MCF 10A (cell line): ENCODE measurements at regions of chr5 and their contacts with region 1.

Region 1: DNA sequence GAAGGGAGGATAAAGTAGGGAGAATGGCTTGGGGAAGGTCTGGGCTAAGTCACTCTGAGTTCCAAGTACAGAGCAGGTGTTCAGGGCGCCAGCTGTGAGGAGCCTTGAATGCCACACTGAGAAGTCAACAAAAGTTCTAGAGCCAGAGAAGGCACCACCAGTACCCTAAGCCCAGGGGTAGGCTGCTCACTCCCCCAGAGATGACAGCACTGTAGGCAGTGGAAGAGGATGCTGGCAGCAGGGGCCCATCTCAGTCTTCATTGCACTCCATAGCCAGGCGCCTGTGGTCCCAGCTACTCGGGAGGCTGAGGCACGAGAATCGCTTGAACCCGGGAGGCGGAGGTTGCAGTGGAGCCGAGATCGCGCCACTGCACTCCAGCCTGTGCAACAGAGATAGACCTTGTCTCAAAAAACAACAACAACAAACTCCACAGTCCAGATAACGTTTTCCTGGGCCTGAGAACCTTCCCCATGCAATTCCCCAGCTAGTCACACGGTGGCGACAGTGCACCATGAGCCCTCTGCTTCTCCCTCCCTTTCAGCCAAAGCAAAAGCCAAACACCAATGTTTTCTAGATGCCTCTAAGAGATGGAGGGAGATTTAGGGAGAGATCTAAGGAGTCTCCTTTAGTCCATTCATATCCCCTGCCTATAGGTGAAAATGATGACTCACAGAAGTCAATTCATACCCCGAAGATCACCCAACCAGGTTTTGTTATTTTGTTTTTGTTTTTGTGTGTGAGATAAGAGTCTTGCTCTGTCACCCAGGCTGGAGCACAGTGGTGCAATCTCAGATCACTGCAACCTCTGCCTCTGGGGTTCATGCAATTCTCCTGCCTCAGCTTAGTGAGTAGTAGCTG is 19.8 kb upstream of the NSD1 start:
- DNase-seq: peak; percentile 86
- H3K4me3 Mint-ChIP-seq: no peak overlapping the region
- H3K27ac Mint-ChIP-seq: no peak overlapping the region
- H3K4me1 Mint-ChIP-seq: peaks cover 4% of the 10 kb centered on the region
- H3K27me3 Mint-ChIP-seq: no peaks in the 10 kb centered on the region
- CTCF ChIP-seq: peak; percentile 100

Region 2: DNA sequence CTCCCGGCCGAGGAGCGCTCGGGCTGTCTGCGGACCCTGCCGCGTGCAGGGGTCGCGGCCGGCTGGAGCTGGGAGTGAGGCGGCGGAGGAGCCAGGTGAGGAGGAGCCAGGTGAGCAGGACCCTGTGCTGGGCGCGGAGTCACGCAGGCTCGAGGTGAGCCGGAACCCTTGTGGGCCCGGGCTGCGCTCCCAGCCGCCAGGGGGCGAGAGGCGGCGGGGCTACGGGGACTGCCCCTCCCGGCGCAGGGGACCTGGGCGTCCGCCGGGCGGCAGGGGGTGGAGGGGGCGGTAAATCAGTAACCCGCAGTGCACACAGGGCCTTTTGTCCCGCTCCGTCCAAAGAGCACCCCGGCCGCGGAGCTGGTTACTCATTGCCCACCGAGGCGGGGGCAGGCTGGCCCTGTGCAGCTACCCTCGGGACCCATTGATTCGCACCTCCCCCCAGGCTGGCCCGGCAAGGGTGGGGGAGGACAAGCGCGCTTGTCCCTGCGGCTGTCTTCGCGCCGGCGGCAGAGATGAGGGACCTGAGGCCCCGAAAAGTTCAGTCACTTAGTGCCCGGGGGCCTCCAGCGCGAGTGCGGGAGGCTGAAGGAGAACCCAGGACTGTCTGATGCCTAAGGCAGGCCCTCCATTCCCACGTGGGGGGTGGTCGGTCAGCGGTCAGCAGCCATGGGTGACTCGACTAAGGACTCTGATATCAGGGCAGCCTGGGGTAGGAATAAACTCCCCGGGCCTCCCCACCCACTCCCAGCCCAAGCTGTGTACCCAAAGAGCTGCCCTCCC is 26.7 kb before region 1 on chr5:
- CTCF ChIA-PET with region 1: interaction called, 56 read pairs
- POLR2A ChIA-PET with region 1: interaction called, 3 read pairs
- intact Hi-C with region 1: no loop called
- DNase-seq: no peak
- H3K4me3 Mint-ChIP-seq: peak overlapping the region; percentile 24
- H3K27ac Mint-ChIP-seq: no peak overlapping the region
- H3K4me1 Mint-ChIP-seq: peaks cover 7% of the 10 kb centered on the region
- H3K27me3 Mint-ChIP-seq: peaks cover 22% of the 10 kb centered on the region
- CTCF ChIP-seq: peak; percentile 59

Region 3: DNA sequence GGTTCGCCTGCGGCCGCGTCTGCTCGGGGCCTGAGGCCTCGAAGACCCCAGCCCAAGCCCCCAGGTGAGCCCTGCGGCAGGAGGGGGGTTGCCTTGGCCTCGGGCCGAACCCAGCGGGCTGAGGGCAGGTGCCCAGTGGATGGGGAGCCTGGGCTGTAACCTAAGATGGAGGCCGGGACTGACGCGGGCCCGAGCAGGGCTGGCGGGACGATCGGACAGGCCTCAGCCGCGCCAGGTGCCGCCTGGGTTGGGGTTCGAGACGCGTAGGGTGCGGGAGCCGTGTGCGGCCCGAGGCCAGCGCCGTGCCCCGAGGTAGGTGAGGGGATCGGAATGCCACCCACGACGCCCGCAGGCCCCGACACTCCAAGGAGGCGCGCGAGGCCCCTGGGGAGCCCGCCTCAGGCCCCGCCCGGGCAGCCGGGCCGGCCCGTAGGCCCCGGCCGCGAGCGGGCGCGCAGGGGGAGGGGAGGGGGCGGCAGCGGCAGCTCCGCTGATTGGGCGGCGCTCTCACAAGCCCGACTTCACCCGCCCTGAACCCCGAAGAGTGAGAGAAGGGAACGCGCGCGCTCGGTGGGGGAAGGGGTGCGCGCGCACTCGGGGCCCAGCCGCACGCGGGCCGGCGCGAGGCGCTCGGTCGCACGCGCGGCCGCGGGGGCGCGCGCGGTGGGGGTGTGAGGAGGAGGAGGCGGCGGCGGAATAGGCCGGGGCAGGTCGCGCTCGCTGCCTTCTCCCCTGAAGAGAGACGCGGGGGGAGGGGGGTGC is 19.5 kb after region 1 on chr5 and contains the start of gene NSD1:
- CTCF ChIA-PET with region 1: interaction called, 140 read pairs
- POLR2A ChIA-PET with region 1: interaction called, 4 read pairs
- intact Hi-C with region 1: no loop called
- DNase-seq: peak; percentile 83
- H3K4me3 Mint-ChIP-seq: peak within 1 kb of the TSS; percentile 74
- H3K27ac Mint-ChIP-seq: peak within 1 kb of the TSS; percentile 65
- H3K4me1 Mint-ChIP-seq: peaks cover 25% of the 10 kb centered on the region
- H3K27me3 Mint-ChIP-seq: no peaks in the 10 kb centered on the region
- CTCF ChIP-seq: no peak
- total RNA-seq, gene NSD1: 110 and 111 TPM in 2 replicates

Region 4: GRCh38 chr5:177256296-177256695 is 142.5 kb after region 1 on chr5:
- CTCF ChIA-PET with region 1: interaction called, 7 read pairs
- POLR2A ChIA-PET with region 1: no interaction called
- intact Hi-C with region 1: loop called (anchors 1 kb)
- DNase-seq: peak; percentile 48
- H3K4me3 Mint-ChIP-seq: no peak overlapping the region
- H3K27ac Mint-ChIP-seq: peak overlapping the region; percentile 60
- H3K4me1 Mint-ChIP-seq: peaks cover 11% of the 10 kb centered on the region
- H3K27me3 Mint-ChIP-seq: no peaks in the 10 kb centered on the region
- CTCF ChIP-seq: no peak

Region 5: DNA sequence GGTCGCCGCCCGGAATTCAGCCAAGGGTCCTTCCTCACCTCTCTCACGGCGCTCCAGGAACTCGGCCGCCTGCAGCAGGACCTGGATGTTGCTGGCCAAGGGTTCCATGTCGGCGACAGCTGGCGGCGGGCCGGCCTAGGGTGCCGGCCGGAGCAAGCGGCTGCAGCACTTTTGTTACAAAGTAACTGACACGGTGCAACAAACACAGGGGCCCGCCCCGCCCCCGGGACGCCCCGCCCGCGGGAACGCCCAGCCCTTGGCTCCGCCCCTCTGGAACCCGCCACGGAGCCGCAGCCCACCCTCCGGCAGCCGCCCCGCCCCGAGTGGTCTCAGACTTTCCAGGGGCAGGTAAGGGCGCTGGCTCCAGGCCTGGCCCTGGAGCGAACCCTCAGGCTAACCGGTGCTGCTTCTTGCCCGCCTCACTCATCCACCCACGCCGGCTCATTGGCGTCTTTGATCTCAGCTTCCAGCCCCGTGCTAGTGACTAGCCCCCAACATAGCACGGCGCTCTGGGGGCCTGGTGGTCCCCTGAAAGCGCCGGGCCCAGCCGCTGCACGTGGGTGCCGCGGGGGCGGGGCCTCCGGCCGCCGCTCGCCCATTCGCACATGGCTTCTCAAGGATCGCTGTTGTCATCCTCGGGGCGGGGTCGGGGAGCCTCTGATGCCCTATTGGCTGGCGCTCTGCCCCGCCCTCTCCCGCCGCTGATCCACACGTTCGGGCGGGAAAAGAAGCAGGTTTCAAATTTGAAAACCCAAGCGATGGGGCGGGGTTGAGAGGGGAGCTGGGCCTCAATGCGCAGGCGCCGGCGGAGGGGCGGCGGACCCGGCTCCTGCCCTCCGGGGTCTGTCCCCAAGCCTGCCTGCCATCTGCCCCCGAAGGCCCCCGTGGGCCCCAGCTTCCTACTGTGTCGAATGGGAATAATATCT is 198.2 kb after region 1 on chr5 and contains the start of gene MXD3:
- CTCF ChIA-PET with region 1: interaction called, 52 read pairs
- POLR2A ChIA-PET with region 1: no interaction called
- intact Hi-C with region 1: loop called (anchors 1 kb)
- DNase-seq: peak; percentile 99
- H3K4me3 Mint-ChIP-seq: peak within 1 kb of the TSS; percentile 66
- H3K27ac Mint-ChIP-seq: peak within 1 kb of the TSS; percentile 51
- H3K4me1 Mint-ChIP-seq: peaks cover 29% of the 10 kb centered on the region
- H3K27me3 Mint-ChIP-seq: no peaks in the 10 kb centered on the region
- CTCF ChIP-seq: no peak
- total RNA-seq, gene MXD3: 8.4 and 13.2 TPM in 2 replicates

Region 6: DNA sequence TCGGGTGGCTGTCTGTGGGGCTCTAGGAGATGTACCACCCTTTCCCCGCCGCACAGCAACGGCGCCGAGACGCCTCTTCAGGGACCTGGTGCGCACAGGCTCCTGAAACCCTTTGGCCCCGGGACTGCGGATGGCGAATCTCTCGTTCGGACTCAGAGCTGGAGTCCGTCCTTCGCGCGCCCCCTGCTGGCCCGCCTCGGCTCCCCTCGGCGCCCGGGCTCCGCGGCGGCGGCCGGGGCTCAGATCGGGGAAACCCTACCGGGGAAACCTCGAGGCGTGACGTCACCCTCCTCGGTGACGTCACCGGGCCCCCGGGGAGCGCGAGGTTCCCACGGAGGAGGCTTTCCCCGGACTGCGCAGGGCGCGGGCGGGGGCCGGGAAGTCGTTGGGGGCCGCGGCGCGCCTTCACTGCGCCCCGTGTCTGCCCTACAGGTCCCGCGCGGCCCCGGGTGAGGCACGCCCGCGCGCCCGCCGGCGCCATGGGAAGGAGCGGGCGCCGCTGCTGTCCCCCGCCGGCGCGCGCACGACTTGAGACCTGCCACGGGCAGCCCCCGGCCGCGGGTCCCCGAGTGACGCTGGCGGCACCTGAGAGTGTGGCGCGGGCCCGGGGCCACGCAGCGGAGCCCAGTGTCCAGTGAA is 340.7 kb after region 1 on chr5:
- CTCF ChIA-PET with region 1: interaction called, 6 read pairs
- POLR2A ChIA-PET with region 1: no interaction called
- intact Hi-C with region 1: loop called (anchors 1 kb)
- DNase-seq: peak; percentile 93
- H3K4me3 Mint-ChIP-seq: peak overlapping the region; percentile 70
- H3K27ac Mint-ChIP-seq: no peak overlapping the region
- H3K4me1 Mint-ChIP-seq: peaks cover 6% of the 10 kb centered on the region
- H3K27me3 Mint-ChIP-seq: no peaks in the 10 kb centered on the region
- CTCF ChIP-seq: peak; percentile 98